Vagina (tissue), 2 donors: ENCODE measurements at regions of chr19 and their contacts with region 1.

Region 1: GRCh38 chr19:12610540-12611360 is at the starts of genes ZNF490 and ZNF791:
- DNase-seq: peak; percentile 98 to 99
- H3K4me3 ChIP-seq: peak within 1 kb of the TSS; percentile 78 to 94
- H3K27ac ChIP-seq: peak within 1 kb of the TSS; percentile 94
- H3K4me1 ChIP-seq: peaks cover 45% of the 10 kb centered on the region
- H3K27me3 ChIP-seq: no peaks in the 10 kb centered on the region
- CTCF ChIP-seq: no peak
- POLR2A ChIP-seq: peak in 1 of 2 donors; percentile 70
- total RNA-seq, gene ZNF490: 4.9 TPM
- total RNA-seq, gene ZNF791: 17.9 TPM

Region 2: GRCh38 chr19:12666265-12667048 is 55.7 kb after region 1 on chr19 and contains the starts of genes MAN2B1 and WDR83:
- intact Hi-C with region 1: loop called (anchors 10 kb)
- DNase-seq: no peak
- H3K4me3 ChIP-seq: peak within 1 kb of the TSS; percentile 66 to 86
- H3K27ac ChIP-seq: peak within 1 kb of the TSS; percentile 56
- H3K4me1 ChIP-seq: peaks cover 49% of the 10 kb centered on the region
- H3K27me3 ChIP-seq: no peaks in the 10 kb centered on the region
- CTCF ChIP-seq: no peak
- POLR2A ChIP-seq: no peak
- total RNA-seq, gene MAN2B1: 49.1 TPM
- total RNA-seq, gene WDR83: 8.3 TPM